ENCODE measurements at regions of chr2 and their contacts with region 1.

Region 1: DNA sequence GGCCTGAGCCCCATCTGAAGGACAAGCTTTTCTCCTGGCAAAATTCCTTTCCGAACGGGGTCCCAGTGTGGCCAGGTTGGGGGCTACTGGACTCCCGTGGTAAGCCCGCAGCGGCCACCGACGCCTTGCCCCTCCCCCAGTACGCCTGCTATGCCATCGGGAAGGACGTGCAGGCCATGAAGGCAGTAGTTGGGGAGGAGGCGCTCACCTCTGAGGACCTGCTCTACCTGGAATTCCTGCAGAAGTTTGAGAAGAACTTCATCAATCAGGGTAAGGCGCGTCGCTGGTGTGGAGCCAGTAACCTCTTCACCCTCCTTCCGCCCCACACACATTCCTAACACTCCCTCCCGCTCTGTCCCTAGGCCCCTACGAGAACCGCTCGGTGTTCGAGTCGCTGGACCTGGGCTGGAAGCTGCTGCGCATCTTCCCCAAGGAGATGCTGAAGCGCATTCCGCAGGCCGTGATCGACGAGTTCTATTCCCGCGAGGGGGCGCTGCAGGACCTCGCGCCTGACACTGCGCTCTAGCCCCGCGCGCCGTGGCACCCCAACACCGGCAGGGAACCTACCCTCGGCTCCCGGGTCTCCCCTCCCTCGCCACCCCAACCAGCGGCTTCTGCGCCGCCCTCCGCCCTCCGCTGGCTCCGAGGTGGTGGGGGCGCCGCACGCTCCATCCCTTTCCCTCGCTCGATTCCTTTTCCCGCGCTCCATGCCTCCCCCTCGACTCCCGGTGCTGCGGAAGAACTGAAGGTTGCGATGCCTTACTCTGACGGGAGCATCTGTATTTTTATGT is 13.6 kb upstream of the ANKRD53 start:
- DNase-seq: no peak
- H3K4me3 ChIP-seq: peak overlapping the region; percentile 60
- CTCF ChIP-seq: peak; percentile 89

Region 2: GRCh38 chr2:70785137-70785911 is 179.5 kb before region 1 on chr2:
- CTCF ChIA-PET with region 1: no interaction called
- POLR2A ChIA-PET with region 1: no interaction called
- DNase-seq: no peak
- H3K4me3 ChIP-seq: no peak overlapping the region
- CTCF ChIP-seq: peak; percentile 41

Region 3: GRCh38 chr2:70837980-70838925 is 126.5 kb before region 1 on chr2:
- CTCF ChIA-PET with region 1: no interaction called
- POLR2A ChIA-PET with region 1: no interaction called
- DNase-seq: no peak
- H3K4me3 ChIP-seq: no peak overlapping the region
- CTCF ChIP-seq: no peak

Region 4: DNA sequence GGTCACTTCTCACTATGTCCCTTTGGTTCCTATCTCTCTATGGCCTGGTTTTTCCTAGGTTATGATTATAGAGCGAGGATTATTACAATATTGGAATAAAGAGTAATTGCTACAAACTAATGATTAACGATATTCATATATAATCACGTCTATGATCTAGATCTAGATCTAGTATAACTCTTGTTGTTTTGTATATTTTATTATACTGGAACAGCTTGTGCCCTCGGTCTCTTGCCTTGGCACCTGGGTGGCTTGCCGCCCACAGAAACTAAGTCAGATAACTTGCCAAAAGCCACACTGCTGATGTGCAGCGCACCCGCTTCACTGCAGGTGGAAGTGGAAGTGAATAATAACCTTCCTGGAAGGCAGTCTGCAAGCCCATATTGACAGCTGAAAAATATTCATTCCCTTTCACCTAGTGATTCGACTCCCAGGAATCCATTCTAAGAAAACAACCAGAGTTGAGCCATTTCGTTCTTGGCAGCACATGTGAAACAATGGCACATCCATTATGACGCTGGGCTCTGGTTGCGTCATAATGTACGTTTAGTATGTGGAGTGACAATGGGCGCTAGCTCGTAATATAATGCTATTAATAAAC is 12.9 kb after region 1 on chr2:
- CTCF ChIA-PET with region 1: interaction called, 111 read pairs
- POLR2A ChIA-PET with region 1: no interaction called
- DNase-seq: peak; percentile 21
- H3K4me3 ChIP-seq: peak overlapping the region; percentile 61
- CTCF ChIP-seq: no peak

Region 5: GRCh38 chr2:70984576-70985282 is 19.9 kb after region 1 on chr2:
- CTCF ChIA-PET with region 1: interaction called, 111 read pairs
- POLR2A ChIA-PET with region 1: no interaction called
- DNase-seq: no peak
- H3K4me3 ChIP-seq: no peak overlapping the region
- CTCF ChIP-seq: peak; percentile 90

Region 6: GRCh38 chr2:70994756-70995729 is 30.3 kb after region 1 on chr2 and contains the start of gene TEX261:
- CTCF ChIA-PET with region 1: interaction called, 10 read pairs
- POLR2A ChIA-PET with region 1: interaction called, 3 read pairs
- DNase-seq: peak; percentile 10
- H3K4me3 ChIP-seq: peak within 1 kb of the TSS; percentile 83
- CTCF ChIP-seq: peak; percentile 86

Region 7: GRCh38 chr2:71000780-71001591 is 36.2 kb after region 1 on chr2:
- CTCF ChIA-PET with region 1: interaction called, 19 read pairs
- POLR2A ChIA-PET with region 1: no interaction called
- DNase-seq: no peak
- H3K4me3 ChIP-seq: peak overlapping the region; percentile 45
- CTCF ChIP-seq: peak; percentile 94